CD8-positive, alpha-beta T cell (primary cell): ENCODE measurements at regions of chr4 and their contacts with region 1.

Region 1: DNA sequence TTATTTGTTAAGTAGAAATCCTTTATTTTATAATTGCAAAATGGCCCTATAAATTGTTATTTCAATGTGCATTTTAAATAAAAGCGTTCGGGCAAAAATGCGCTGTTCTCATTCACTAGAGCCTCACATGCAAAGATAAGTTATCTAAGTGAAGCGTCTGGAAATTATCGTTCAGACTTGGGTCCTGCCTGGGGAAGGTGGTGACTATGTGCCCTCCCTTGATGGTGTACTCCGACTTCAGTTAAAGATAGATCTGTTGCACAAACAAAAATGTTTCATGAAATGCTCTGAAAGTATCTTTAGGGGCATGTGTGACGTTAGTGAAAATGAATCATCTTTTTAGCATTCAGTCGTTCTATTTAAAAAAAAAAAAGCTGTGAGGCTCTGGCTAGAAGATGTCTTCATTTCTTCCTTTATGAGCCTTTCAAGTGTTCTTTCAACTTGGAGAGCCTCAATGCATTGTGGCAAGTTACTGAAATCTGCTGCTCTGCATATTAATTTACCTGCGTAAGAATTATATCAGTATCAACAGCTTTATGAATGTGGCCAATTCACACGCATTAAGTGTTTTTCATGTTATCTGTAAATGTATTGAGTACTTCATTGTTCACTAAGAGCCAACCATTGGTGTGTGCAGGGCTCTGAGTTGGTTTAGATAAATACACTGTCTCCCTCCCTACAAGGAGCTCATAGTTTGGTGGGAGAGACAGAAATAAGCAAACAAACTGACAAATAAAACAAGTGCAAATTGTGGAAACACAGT is 83.0 kb downstream of the AFF1 start:
- DNase-seq: peak in 1 of 9 experiments; percentile 27
- ATAC-seq: peak; percentile 84
- H3K4me3 ChIP-seq: no peak overlapping the region
- H3K4me3 Mint-ChIP-seq: no peak overlapping the region
- H3K27ac ChIP-seq: no peak overlapping the region
- H3K27ac Mint-ChIP-seq: peak overlapping the region; percentile 5
- H3K4me1 ChIP-seq: peaks cover 48% of the 10 kb centered on the region
- H3K4me1 Mint-ChIP-seq: peaks cover 83% of the 10 kb centered on the region
- H3K27me3 ChIP-seq: no peaks in the 10 kb centered on the region
- H3K27me3 Mint-ChIP-seq: no peaks in the 10 kb centered on the region
- CTCF ChIP-seq: no peak

Region 2: DNA sequence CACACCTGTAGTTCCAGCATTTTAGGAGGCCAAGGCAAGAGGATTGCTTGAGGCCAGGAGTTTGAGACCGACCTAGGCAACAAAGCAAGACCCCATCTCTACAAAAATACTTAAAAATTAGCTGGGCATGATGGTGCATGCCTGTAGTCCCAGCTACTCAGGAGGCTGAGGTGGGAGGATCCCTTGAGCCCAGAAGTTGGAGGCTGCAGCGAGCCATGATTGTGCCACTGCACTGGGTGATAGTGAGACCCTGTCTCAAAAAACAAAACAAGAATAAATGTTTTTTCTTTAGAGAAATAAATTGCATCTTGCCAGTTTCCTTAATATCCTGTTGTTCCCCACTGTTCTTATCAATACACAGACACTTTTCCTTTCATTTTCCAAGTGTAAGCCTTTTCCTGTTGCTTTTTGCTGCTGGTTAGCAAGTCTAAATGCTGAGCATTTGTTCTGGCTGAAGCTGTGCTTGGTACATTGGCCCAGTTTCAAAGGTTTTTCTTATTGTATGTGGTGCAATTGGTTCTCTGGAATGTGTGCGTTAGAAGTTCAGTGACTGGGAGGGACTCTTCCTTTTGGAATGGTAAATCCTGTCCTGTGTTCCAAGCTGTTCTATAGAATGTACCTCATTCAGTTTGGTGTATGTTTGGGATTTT is 15.2 kb after region 1 on chr4:
- CTCF ChIA-PET with region 1: no interaction called
- POLR2A ChIA-PET with region 1: no interaction called
- intact Hi-C with region 1: loop called in 1 of 2 experiments (anchors 2 kb)
- DNase-seq: no peak
- ATAC-seq: no peak
- H3K4me3 ChIP-seq: no peak overlapping the region
- H3K4me3 Mint-ChIP-seq: no peak overlapping the region
- H3K27ac ChIP-seq: no peak overlapping the region
- H3K27ac Mint-ChIP-seq: no peak overlapping the region
- H3K4me1 ChIP-seq: peaks cover 12% of the 10 kb centered on the region
- H3K4me1 Mint-ChIP-seq: peaks cover 50% of the 10 kb centered on the region
- H3K27me3 ChIP-seq: no peaks in the 10 kb centered on the region
- H3K27me3 Mint-ChIP-seq: no peaks in the 10 kb centered on the region
- CTCF ChIP-seq: no peak